Naive thymus-derived CD8-positive, alpha-beta T cell (primary cell): ENCODE measurements at regions of chr5 and their contacts with region 1.

Region 1: DNA sequence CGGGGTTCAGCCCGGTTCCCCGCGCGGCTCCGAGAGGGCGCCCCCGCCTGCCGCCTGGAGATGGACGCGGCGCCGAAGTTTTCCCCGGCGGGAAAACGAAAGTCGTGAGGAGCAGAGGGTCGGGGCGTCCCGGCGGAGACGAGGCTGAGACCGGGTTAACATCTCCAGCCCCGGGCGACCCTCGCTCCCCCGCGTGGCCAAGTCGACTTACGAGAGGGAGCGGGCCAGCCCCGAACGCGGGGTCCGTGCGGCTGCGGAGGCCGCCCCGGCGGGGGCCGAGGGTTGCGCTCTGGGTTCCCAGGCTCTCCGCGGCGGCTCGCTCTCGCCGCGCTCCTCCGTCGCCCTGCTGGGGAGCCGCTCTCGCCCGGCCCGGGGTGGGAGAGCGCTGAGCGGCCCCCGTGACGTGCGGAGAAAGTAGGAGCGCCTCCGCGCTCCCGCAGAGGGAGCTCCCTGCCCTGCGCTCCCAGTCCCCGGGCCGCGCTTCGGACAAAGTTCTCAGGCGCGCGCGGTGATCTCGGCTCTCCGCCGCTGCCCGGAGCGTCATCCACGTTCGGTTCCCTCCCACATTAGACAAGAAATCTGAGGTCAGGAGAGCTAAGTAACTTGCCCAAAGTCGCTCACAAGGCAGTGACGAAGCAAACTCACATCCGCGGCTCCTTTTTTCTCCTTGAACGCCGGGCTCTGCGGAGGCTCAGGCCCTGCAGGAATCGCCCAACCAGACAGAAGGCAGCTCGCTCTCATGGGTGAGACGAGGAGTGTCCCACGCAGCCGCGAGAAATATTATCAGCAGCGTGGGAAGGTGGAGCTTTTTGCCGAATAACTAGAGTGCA is 1.2 kb upstream of the GCNT4 start:
- DNase-seq: peak; percentile 36 to 84 (median 70)
- ATAC-seq: peak; percentile 34 to 57
- H3K4me3 Mint-ChIP-seq: peak overlapping the region; percentile 77 to 97 (median 94)
- H3K27ac Mint-ChIP-seq: peak overlapping the region; percentile 91 to 99 (median 98)
- H3K4me1 Mint-ChIP-seq: peaks cover 48 to 86% (median 81%) of the 10 kb centered on the region in 4 donors
- H3K27me3 Mint-ChIP-seq: peaks cover 0 to 8% (median 0%) of the 10 kb centered on the region in 5 donors

Region 2: DNA sequence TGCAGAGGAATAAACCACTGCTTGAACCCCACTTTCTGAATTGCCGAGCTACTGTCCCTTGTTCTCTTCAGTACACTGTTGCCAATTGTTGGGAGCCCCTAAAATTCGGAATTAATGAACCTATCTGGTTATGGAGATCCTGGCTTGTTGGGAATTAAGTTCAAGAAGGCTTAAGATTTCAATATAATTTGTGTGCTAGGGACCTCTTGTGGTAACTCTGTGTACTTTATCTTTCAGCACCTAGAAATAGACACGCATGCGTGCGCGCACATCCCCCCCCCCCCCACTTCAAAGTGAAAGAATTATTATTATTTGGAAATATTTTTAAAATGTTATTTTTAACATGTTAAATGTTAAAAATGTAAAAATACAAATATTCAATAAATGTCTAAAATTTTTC is 134.0 kb before region 1 on chr5:
- POLR2A ChIA-PET with region 1: interaction called, 12 read pairs
- DNase-seq: peak in 5 of 10 donors; percentile 6 to 48 (median 34)
- ATAC-seq: peak; percentile 61 to 62
- H3K4me3 Mint-ChIP-seq: no peak overlapping the region
- H3K27ac Mint-ChIP-seq: no peak overlapping the region
- H3K4me1 Mint-ChIP-seq: no peaks in the 10 kb centered on the region
- H3K27me3 Mint-ChIP-seq: peaks cover 1 to 13% (median 3%) of the 10 kb centered on the region in 5 donors

Region 3: GRCh38 chr5:74974451-74975091 is 78.9 kb before region 1 on chr5:
- POLR2A ChIA-PET with region 1: interaction called, 15 read pairs
- DNase-seq: peak in 4 of 10 donors; percentile 3 to 42 (median 35)
- ATAC-seq: peak; percentile 78 to 80
- H3K4me3 Mint-ChIP-seq: peak overlapping the region in 9 of 10 donors; percentile 25 to 73 (median 62)
- H3K27ac Mint-ChIP-seq: peak overlapping the region; percentile 36 to 97 (median 76)
- H3K4me1 Mint-ChIP-seq: peaks cover 13 to 47% (median 35%) of the 10 kb centered on the region in 4 donors
- H3K27me3 Mint-ChIP-seq: no peaks in the 10 kb centered on the region

Region 4: GRCh38 chr5:75037135-75037534 is 16.4 kb before region 1 on chr5:
- POLR2A ChIA-PET with region 1: interaction called, 85 read pairs
- DNase-seq: no peak
- ATAC-seq: no peak
- H3K4me3 Mint-ChIP-seq: peak overlapping the region in 2 of 10 donors; percentile 3 to 54
- H3K27ac Mint-ChIP-seq: peak overlapping the region; percentile 43 to 94 (median 85)
- H3K4me1 Mint-ChIP-seq: peaks cover 36 to 85% (median 72%) of the 10 kb centered on the region in 4 donors
- H3K27me3 Mint-ChIP-seq: no peaks in the 10 kb centered on the region

Region 5: GRCh38 chr5:75236322-75237316 is 183.1 kb after region 1 on chr5 and contains the start of gene ANKRD31:
- POLR2A ChIA-PET with region 1: interaction called, 201 read pairs
- DNase-seq: peak; percentile 83 to 95 (median 91)
- ATAC-seq: peak; percentile 93 to 95
- H3K4me3 Mint-ChIP-seq: peak within 1 kb of the TSS; percentile 80 to 98 (median 94)
- H3K27ac Mint-ChIP-seq: peak within 1 kb of the TSS; percentile 97 to 100 (median 98)
- H3K4me1 Mint-ChIP-seq: peaks cover 4 to 24% (median 22%) of the 10 kb centered on the region in 4 donors
- H3K27me3 Mint-ChIP-seq: no peaks in the 10 kb centered on the region
- polyA plus RNA-seq, gene ANKRD31: 0.55 to 0.58 (median 0.55) TPM

Region 6: GRCh38 chr5:76104027-76104426 is 1050.5 kb after region 1 on chr5:
- POLR2A ChIA-PET with region 1: no interaction called
- DNase-seq: no peak
- ATAC-seq: no peak
- H3K4me3 Mint-ChIP-seq: no peak overlapping the region
- H3K27ac Mint-ChIP-seq: no peak overlapping the region
- H3K4me1 Mint-ChIP-seq: peaks cover 7 to 15% (median 9%) of the 10 kb centered on the region in 4 donors
- H3K27me3 Mint-ChIP-seq: peaks cover 17 to 39% (median 25%) of the 10 kb centered on the region in 5 donors